Tibial artery (tissue), 4 donors: ENCODE measurements at regions of chr6 and their contacts with region 1.

Region 1: DNA sequence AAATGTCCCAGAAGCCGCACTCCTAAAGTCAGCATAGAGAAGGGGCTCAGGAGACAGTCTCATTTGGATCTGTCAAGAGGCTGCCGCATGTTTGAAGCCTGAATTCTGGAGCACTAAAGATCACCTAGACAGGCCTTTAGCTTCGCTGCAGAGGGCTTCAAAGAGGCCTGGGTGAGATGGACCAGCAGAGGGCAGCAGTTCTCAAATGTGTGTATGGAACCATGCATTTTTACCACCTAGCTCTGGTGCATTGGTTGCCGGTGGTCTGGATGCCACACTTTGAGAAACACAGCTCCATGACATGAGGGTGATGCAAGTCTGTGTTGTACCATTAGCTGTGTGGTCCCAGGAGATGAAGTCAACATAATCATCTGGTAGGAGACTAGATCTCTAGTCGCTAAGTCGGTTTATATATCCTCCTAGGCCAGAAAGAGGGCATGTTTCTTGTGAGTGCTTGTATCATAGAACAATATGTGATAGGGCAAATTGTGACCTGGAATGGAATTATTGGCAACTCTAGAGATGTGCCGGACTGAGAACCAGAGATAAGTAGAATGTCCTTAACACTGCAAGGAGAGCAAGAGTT is 64.8 kb downstream of the KIAA0319 start:
- DNase-seq: peak; percentile 69 to 77
- H3K4me3 ChIP-seq: no peak overlapping the region
- H3K27ac ChIP-seq: no peak overlapping the region
- H3K4me1 ChIP-seq: peaks cover 0 to 8% (median 4%) of the 10 kb centered on the region in 4 donors
- H3K27me3 ChIP-seq: no peaks in the 10 kb centered on the region
- CTCF ChIP-seq: peak; percentile 57 to 67

Region 2: GRCh38 chr6:24699521-24700359 is 118.6 kb after region 1 on chr6:
- intact Hi-C with region 1: loop called (anchors 2 kb)
- DNase-seq: no peak
- H3K4me3 ChIP-seq: no peak overlapping the region
- H3K27ac ChIP-seq: peak overlapping the region in 1 of 2 donors; percentile 17
- H3K4me1 ChIP-seq: peaks cover 0 to 10% (median 2%) of the 10 kb centered on the region in 4 donors
- H3K27me3 ChIP-seq: no peaks in the 10 kb centered on the region
- CTCF ChIP-seq: no peak

Region 3: DNA sequence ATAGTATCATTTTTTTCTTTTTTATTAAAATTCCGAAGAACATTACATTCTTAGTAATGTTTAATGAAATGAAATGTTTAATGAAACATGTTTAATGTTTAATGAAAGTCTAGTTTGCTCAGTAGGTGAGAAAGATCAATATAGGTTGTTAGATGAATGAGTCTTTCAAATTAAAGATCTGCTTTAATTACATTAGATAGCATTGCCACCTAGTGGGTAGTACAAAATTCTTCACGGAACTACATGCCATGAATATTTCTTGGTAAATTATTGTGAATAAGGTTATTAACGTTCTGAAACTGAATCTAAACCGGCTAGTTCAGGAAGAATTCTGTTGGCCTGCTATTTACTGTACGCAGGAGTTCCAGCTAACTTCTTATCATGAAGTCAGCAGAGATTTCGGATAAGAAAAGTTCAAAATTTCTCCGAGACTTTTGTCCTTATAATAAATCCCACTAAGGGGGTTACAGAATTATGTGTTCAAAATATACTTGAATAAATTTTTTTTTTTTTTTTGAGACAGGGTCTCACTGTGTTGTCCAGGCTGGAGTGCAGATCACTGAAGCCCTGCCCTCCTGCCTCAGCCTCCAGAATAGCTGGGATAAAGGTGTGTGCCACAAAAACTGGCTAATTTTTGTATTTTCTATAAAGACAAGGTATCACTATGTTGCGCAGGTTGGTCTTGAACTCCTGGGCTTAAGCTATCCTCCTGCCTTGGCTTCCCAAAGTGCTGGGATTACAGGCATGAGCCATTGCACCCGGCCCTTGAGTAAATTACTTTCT is 185.7 kb after region 1 on chr6:
- intact Hi-C with region 1: loop called (anchors 10 kb)
- DNase-seq: no peak
- H3K4me3 ChIP-seq: no peak overlapping the region
- H3K27ac ChIP-seq: no peak overlapping the region
- H3K4me1 ChIP-seq: peaks cover 0 to 2% (median 0%) of the 10 kb centered on the region in 4 donors
- H3K27me3 ChIP-seq: no peaks in the 10 kb centered on the region
- CTCF ChIP-seq: peak; percentile 21 to 40

Region 4: GRCh38 chr6:25061289-25061936 is 480.2 kb after region 1 on chr6:
- intact Hi-C with region 1: loop called (anchors 10 kb)
- DNase-seq: no peak
- H3K4me3 ChIP-seq: no peak overlapping the region
- H3K27ac ChIP-seq: no peak overlapping the region
- H3K4me1 ChIP-seq: no peaks in the 10 kb centered on the region
- H3K27me3 ChIP-seq: no peaks in the 10 kb centered on the region
- CTCF ChIP-seq: no peak